Natural killer cell (primary cell): ENCODE measurements at regions of chr3 and their contacts with region 1.

Region 1: DNA sequence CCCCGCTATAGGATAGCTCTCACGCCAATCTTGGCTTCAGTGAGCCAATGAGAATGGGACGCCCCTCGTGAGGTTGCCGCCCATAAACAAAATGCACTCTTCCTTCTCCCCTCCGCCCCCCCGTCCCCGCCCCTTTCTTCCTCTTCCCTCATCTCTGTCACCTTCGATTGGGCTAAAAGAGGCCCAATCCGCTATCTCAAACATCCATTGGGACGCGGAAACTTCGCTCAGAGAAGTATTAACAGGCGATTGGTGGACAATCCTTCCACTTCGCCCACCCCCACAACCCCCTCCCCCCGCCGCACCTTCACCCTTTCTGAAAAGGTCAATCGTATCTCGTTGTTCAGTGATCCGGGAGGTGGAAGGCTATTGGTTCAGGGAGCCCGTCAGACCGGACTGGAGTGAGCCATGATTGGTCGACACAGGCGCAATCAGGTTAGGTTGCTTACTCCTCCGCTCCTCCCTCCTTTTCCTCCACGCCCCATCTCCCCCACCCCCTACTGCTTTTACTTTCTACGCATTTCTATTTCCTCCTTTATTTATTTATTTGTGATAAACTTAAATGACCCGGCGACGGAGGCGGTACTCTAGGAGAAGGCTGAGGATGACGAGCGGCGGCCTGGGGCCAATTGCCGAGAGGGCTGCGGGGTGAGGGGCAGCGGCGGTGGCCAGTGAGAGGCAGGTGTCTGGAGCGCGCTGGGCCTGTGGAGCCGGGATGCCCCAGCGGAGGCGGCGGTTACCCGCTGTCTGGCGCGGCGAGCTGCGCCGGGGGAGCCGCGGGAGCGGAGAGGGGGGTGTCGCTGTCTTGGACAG is 447 bp upstream of the ZBTB20 start:
- DNase-seq: peak; percentile 92 to 100
- ATAC-seq: peak; percentile 71 to 87 (median 75)
- H3K4me3 ChIP-seq: peak overlapping the region; percentile 90
- H3K4me3 Mint-ChIP-seq: peak overlapping the region; percentile 93
- H3K27ac ChIP-seq: peak overlapping the region; percentile 96
- H3K27ac Mint-ChIP-seq: peak overlapping the region; percentile 90 to 99
- H3K4me1 ChIP-seq: peaks cover 10% of the 10 kb centered on the region
- H3K4me1 Mint-ChIP-seq: peaks cover 18 to 19% of the 10 kb centered on the region in 2 donors
- H3K27me3 ChIP-seq: no peaks in the 10 kb centered on the region
- H3K27me3 Mint-ChIP-seq: no peaks in the 10 kb centered on the region
- CTCF ChIP-seq: no peak

Region 2: GRCh38 chr3:114056130-114057010 is 1091.2 kb before region 1 on chr3 and contains the starts of genes CCDC191 and QTRT2:
- intact Hi-C with region 1: loop called (anchors 2 kb)
- DNase-seq: peak; percentile 97 to 100
- ATAC-seq: peak; percentile 94 to 98 (median 96)
- H3K4me3 ChIP-seq: peak within 1 kb of the TSS; percentile 82
- H3K4me3 Mint-ChIP-seq: peak within 1 kb of the TSS; percentile 98
- H3K27ac ChIP-seq: peak within 1 kb of the TSS; percentile 69
- H3K27ac Mint-ChIP-seq: peak within 1 kb of the TSS; percentile 95 to 96
- H3K4me1 ChIP-seq: peaks cover 6% of the 10 kb centered on the region
- H3K4me1 Mint-ChIP-seq: peaks cover 38 to 47% of the 10 kb centered on the region in 2 donors
- H3K27me3 ChIP-seq: no peaks in the 10 kb centered on the region
- H3K27me3 Mint-ChIP-seq: no peaks in the 10 kb centered on the region
- CTCF ChIP-seq: no peak
- total RNA-seq, gene CCDC191: 5.5 to 6.4 (median 5.7) TPM
- total RNA-seq, gene QTRT2: 30.1 to 33.4 (median 30.5) TPM

Region 3: GRCh38 chr3:115092220-115092791 is 55.2 kb before region 1 on chr3:
- intact Hi-C with region 1: loop called (anchors 5 kb)
- DNase-seq: peak; percentile 35 to 81
- ATAC-seq: peak; percentile 64 to 70 (median 67)
- H3K4me3 ChIP-seq: no peak overlapping the region
- H3K4me3 Mint-ChIP-seq: no peak overlapping the region
- H3K27ac ChIP-seq: no peak overlapping the region
- H3K27ac Mint-ChIP-seq: no peak overlapping the region
- H3K4me1 ChIP-seq: no peaks in the 10 kb centered on the region
- H3K4me1 Mint-ChIP-seq: no peaks in the 10 kb centered on the region
- H3K27me3 ChIP-seq: no peaks in the 10 kb centered on the region
- H3K27me3 Mint-ChIP-seq: no peaks in the 10 kb centered on the region
- CTCF ChIP-seq: peak; percentile 79

Region 4: GRCh38 chr3:115169808-115170207 is 22.3 kb after region 1 on chr3:
- intact Hi-C with region 1: loop called (anchors 1 kb)
- DNase-seq: peak in 1 of 2 donors; percentile 34
- ATAC-seq: no peak
- H3K4me3 ChIP-seq: no peak overlapping the region
- H3K4me3 Mint-ChIP-seq: no peak overlapping the region
- H3K27ac ChIP-seq: no peak overlapping the region
- H3K27ac Mint-ChIP-seq: no peak overlapping the region
- H3K4me1 ChIP-seq: peaks cover 5% of the 10 kb centered on the region
- H3K4me1 Mint-ChIP-seq: peaks cover 11 to 12% of the 10 kb centered on the region in 2 donors
- H3K27me3 ChIP-seq: peaks cover 2% of the 10 kb centered on the region
- H3K27me3 Mint-ChIP-seq: peaks cover 8 to 10% of the 10 kb centered on the region in 2 donors
- CTCF ChIP-seq: peak; percentile 53

Region 5: DNA sequence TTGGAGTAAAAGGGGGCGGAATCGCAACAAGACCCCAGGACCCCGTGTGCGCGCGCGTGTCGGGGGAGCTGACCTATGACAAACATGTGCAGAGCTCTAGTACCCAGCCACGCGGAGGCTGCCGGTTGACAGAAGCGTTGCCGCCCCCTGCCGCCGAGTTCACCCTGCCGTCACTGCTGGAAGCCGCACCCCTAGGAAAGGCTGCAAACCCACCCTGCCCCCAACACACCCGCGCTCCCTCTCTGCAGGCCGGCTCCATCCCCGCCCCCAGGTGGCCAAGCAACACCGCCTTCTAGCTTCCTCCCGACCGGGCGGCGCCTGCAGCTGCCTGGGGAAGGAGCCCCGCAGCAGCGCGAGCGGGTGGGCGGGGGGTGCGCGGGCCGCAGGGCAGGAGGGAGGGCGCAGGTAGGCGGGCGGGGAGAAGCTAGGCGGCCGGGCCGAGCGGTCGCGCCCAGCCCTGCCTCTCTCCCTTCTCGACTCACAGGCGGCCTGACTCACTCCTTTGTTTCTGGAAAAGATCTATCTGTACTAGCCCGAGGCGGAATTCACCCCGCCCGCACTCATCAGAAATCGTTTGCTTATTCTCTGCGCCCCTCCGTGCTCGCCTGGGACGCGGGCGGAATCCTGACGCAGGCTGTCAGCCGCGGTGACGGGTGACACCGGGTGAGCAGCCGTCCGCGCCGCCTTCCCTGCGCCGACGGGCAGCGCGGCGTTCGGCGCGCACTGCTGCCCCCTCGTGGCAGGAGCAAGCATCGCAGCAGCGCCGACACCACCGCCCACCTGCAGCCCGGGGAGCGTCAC is 636.6 kb after region 1 on chr3:
- intact Hi-C with region 1: loop called (anchors 1 kb)
- DNase-seq: peak; percentile 86 to 96
- ATAC-seq: peak; percentile 81 to 94 (median 87)
- H3K4me3 ChIP-seq: peak overlapping the region; percentile 70
- H3K4me3 Mint-ChIP-seq: peak overlapping the region; percentile 93
- H3K27ac ChIP-seq: peak overlapping the region; percentile 99
- H3K27ac Mint-ChIP-seq: peak overlapping the region; percentile 89 to 91
- H3K4me1 ChIP-seq: peaks cover 10% of the 10 kb centered on the region
- H3K4me1 Mint-ChIP-seq: peaks cover 12% of the 10 kb centered on the region in 2 donors
- H3K27me3 ChIP-seq: peaks cover 3% of the 10 kb centered on the region
- H3K27me3 Mint-ChIP-seq: peaks cover 8 to 15% of the 10 kb centered on the region in 2 donors
- CTCF ChIP-seq: peak; percentile 89